ENCODE measurements at regions of chr6 and their contacts with region 1.

Region 1: GRCh38 chr6:157535339-157536222 is 154.6 kb downstream of the ZDHHC14 start:
- DNase-seq: peak; percentile 59
- H3K4me3 Mint-ChIP-seq: no peak overlapping the region
- H3K27ac Mint-ChIP-seq: peak overlapping the region; percentile 56
- H3K4me1 Mint-ChIP-seq: peaks cover 24% of the 10 kb centered on the region
- H3K27me3 Mint-ChIP-seq: peaks cover 7% of the 10 kb centered on the region

Region 2: GRCh38 chr6:157054531-157054979 is 481.0 kb before region 1 on chr6:
- CTCF ChIA-PET with region 1: no interaction called
- intact Hi-C with region 1: loop called (anchors 10 kb)
- DNase-seq: peak; percentile 67
- H3K4me3 Mint-ChIP-seq: peak overlapping the region; percentile 29
- H3K27ac Mint-ChIP-seq: peak overlapping the region; percentile 94
- H3K4me1 Mint-ChIP-seq: peaks cover 43% of the 10 kb centered on the region
- H3K27me3 Mint-ChIP-seq: no peaks in the 10 kb centered on the region

Region 3: DNA sequence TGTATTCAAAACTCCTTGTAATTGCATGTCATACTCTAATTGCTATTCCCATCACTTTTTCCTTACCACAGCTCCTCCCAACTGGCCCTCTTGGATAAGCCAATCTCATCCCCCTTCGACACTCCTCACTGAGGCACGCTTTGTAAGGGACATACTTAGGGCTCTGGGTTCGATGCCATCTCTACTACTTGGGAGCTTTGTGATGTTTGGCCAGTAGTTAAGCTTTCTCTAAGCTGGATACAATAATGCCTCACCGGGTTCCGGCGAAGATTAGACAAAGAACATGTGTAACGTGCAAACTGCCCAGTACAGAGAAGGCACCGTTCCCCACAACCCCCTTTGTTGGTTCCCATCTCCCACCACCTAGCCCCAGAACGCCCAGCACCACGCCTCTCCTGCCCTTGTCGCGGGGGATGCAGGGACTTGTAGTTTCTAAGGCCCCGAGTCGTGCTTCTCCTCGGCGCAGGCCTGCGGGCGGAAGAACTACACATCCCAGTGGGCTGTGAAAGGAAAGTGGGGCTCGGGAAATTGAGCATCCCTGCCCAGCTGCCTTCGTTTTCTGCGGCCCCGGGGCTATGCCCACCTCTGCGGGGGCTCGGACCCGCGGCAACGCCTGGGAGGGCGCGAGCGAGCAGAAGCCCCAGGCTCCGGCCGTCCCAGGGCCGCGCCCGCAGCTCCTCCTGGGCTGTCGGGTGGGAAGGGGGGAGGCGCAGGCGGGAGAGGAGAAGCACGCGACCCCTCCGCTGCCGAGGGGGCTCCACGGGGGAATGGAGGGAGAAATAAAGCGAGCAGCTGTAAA is 155.7 kb before region 1 on chr6:
- CTCF ChIA-PET with region 1: no interaction called
- intact Hi-C with region 1: loop called (anchors 1 kb)
- DNase-seq: peak; percentile 92
- H3K4me3 Mint-ChIP-seq: peak overlapping the region; percentile 81
- H3K27ac Mint-ChIP-seq: peak overlapping the region; percentile 59
- H3K4me1 Mint-ChIP-seq: peaks cover 36% of the 10 kb centered on the region
- H3K27me3 Mint-ChIP-seq: peaks cover 12% of the 10 kb centered on the region

Region 4: DNA sequence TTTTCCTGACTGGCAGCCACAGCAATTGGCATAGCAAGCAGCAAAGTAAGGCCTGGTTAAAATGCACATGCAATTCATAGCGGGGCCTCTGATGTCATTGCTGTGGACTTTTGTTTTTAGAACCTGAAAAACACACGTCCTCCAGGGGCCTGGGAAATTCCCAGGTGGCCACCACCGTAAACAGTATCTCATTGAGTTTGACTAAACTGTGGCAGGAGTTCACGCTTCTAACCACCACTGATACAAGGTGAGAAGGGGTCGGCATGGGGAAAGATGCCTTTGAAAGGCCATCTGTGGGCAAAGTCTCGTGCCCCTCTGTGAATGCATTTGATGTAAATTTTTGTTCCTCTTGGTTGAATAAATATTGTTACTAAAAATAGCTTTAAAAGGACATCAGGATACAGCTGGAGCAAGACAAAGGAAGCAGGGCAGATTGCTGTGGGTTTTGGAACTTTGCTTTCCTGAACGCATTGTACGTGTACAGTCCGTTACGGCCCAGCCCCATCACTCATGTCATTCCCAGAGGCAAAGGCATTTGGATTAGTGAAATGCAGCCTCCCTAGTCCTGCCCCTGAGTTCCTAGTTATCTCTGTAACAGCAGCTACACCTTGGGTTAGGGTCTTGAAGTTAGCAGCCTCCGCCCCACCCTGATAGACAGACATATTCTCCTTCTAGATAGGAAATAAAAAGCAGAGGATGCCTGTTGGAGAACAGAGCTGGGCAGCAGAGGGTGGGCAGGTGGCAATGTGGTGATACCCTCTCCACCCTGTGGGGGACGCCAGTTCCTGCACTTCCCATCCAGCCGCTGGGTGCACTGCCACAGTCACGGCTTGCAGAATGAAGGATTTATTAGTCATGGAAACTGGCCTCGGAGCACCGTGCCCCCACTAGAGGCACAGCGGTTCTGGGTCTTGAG is 74.3 kb before region 1 on chr6:
- CTCF ChIA-PET with region 1: interaction called, 3 read pairs
- intact Hi-C with region 1: loop called (anchors 1 kb)
- DNase-seq: peak; percentile 91
- H3K4me3 Mint-ChIP-seq: no peak overlapping the region
- H3K27ac Mint-ChIP-seq: peak overlapping the region; percentile 65
- H3K4me1 Mint-ChIP-seq: peaks cover 36% of the 10 kb centered on the region
- H3K27me3 Mint-ChIP-seq: no peaks in the 10 kb centered on the region

Region 5: DNA sequence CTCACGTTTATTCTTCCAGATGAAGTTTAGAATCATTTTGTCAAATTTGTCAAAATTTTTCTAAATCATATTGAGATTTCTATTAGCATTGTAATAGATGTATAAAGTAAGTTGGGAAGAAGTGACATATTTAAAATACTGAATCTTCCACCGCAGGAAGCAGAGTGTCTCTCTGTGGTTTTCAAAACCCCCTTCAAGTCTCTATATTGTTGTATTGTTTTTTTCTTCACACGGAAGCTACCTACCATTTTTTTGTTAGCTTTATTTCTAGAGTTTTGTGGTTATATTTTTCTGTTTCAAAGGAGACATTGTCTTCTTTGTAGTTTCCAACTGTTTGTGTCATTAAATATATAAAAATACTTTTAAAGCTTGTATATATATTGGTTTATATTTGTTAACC is 34.0 kb after region 1 on chr6:
- CTCF ChIA-PET with region 1: no interaction called
- intact Hi-C with region 1: loop called (anchors 1 kb)
- DNase-seq: peak; percentile 18
- H3K4me3 Mint-ChIP-seq: no peak overlapping the region
- H3K27ac Mint-ChIP-seq: no peak overlapping the region
- H3K4me1 Mint-ChIP-seq: peaks cover 18% of the 10 kb centered on the region
- H3K27me3 Mint-ChIP-seq: no peaks in the 10 kb centered on the region

Region 6: DNA sequence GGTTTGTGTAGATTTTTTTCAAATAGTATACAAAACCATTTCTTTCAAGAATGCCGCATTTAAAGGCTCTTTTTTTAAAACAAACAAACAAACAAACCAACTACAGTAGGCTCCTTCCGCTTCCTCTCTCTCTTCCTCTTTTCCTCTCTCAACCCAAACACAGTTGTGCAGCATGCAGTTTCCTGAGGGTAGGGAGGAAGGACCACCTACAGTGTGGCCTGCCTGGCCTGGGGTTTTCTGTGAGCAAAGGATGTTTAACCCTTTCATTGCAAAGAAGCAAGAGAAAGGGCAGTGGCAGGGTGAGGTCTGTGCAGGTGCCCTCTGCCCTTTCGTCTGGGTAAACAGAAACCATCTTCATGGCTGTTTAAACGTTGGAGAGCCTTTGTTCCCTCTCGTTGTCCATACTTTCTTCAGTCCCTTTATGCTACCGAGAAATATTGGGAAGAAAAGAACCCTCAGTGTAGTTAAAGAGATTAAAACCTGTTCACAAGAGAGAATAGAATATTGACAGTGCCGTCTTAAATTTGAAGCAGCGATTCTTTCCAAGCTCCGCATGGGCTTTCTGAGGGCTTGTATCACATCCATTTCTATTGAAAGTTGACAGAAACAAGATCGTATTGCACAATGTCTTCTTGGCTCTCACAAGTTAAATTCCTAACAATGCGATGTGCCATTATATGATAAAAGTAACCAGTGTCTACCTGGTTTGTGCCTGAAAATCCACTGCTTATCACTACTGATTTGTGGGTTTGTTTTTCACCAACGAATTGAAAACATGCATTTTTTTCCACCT is 71.9 kb after region 1 on chr6:
- CTCF ChIA-PET with region 1: no interaction called
- intact Hi-C with region 1: no loop called
- DNase-seq: no peak
- H3K4me3 Mint-ChIP-seq: no peak overlapping the region
- H3K27ac Mint-ChIP-seq: no peak overlapping the region
- H3K4me1 Mint-ChIP-seq: no peaks in the 10 kb centered on the region
- H3K27me3 Mint-ChIP-seq: no peaks in the 10 kb centered on the region

Measured in activated naive CD4-positive, alpha-beta T cell treated with anti-CD3 and anti-CD28 coated beads for 36 hours (primary cell).